Endothelial cell of umbilical vein (primary cell): ENCODE measurements at regions of chr11 and their contacts with region 1.

Region 1: GRCh38 chr11:66677599-66678375 is at the start of gene RBM4B:
- DNase-seq: peak; percentile 97
- H3K4me3 ChIP-seq: peak within 1 kb of the TSS; percentile 65 to 86 (median 76)
- H3K27ac ChIP-seq: peak within 1 kb of the TSS; percentile 87
- H3K4me1 ChIP-seq: peaks cover 17% of the 10 kb centered on the region
- H3K27me3 ChIP-seq: no peaks in the 10 kb centered on the region
- CTCF ChIP-seq: no peak
- POLR2A ChIP-seq: peak; percentile 79
- total RNA-seq, gene RBM4B: 19.4 and 22.2 TPM in 2 replicates

Region 2: GRCh38 chr11:66386171-66387069 is 291.4 kb before region 1 on chr11:
- CTCF ChIA-PET with region 1: interaction called, 15 read pairs
- POLR2A ChIA-PET with region 1: no interaction called
- dilution Hi-C with region 1: no loop called
- intact Hi-C with region 1: no loop called
- DNase-seq: peak; percentile 77
- H3K4me3 ChIP-seq: no peak overlapping the region
- H3K27ac ChIP-seq: no peak overlapping the region
- H3K4me1 ChIP-seq: peaks cover 3% of the 10 kb centered on the region
- H3K27me3 ChIP-seq: peaks cover 4 to 8% of the 10 kb centered on the region in 2 experiments
- CTCF ChIP-seq: peak; percentile 90 to 97
- POLR2A ChIP-seq: no peak

Region 3: DNA sequence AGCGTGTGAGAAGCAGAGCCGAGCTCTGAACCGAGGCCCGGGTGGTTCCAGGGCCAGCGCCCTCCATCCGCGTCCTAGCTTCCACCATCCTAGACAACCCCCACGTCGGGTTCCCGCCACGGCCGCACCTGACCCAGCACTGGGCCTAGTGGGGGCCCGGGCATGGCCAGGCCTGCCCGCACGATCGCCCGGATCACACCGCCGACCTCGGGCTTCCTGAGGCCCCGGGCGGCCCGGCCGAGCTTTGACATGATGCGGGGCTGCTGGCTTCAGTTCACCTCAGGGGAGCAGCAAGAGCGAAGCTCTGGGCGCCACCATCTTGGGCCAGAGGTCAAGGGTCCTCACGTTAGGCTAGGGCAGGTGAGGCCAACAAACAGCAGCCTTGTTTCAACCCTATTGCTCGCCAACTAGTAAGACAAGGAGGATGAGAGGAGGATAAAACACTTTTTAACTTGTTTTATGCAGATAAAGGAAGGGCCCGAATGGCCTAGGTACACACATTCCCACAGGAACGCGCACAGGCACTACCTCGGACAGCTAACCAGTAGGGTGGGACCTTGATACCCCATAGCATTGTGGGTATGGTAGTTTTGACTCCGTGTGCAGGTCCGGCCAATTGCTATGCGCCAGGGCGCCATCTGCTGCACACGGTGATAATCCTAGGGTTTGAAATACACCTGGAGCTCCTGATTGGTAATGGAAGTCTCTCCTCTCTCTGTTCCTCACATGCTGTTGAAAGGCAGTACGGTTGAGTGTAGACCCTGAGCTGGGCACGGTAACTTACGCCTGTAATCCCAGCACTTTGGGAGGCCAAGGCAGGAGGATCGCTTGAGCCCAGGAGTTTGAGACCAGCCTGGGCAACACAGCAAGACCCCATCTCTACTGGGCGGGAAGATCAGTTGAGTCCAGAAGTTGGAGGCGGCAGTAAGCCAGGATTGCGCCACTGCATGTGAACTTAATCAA is 239.0 kb before region 1 on chr11 and contains the start of gene MRPL11:
- CTCF ChIA-PET with region 1: interaction called, 19 read pairs
- POLR2A ChIA-PET with region 1: interaction called, 4 read pairs
- dilution Hi-C with region 1: no loop called
- intact Hi-C with region 1: no loop called
- DNase-seq: peak; percentile 95
- H3K4me3 ChIP-seq: peak within 1 kb of the TSS; percentile 59 to 80 (median 64)
- H3K27ac ChIP-seq: peak within 1 kb of the TSS; percentile 77
- H3K4me1 ChIP-seq: peaks cover 6% of the 10 kb centered on the region
- H3K27me3 ChIP-seq: no peaks in the 10 kb centered on the region
- CTCF ChIP-seq: peak; percentile 70 to 77
- POLR2A ChIP-seq: no peak
- total RNA-seq, gene MRPL11: 69.1 and 72.1 TPM in 2 replicates

Region 4: DNA sequence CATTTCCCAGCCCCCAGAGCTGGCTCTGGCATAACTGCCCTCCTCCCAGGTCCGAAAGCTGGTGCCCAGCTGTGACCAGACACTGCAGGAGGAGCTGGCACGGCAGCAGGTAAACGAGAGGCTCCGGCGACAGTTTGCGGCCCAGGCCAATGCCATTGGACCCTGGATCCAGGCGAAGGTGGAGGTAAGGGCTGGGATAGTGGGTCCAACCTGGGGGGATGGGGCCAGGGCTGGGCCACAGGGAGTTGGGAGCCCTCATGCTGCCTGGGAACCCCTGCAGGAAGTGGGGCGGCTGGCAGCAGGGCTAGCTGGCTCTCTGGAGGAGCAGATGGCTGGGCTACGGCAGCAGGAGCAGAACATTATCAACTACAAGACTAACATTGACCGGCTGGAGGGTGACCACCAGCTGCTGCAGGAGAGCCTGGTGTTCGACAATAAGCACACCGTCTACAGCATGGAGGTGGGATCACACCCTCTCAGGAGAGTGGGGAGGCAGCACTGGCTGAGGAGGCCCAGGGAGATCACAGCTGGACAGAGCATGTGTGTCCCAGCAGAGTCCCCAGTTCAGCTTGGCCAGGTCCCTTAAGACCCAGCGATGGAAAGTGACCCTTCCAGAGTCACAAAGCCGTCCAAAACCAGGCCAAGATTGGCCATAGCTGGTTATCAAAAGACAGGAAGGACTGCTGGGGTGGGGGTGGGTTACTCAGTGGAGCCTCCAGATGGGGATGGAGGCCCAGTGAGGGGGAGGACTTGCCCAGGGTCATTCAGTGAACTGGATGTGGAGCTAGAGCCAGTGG is 116.4 kb before region 1 on chr11:
- CTCF ChIA-PET with region 1: interaction called, 13 read pairs
- POLR2A ChIA-PET with region 1: no interaction called
- dilution Hi-C with region 1: no loop called
- intact Hi-C with region 1: no loop called
- DNase-seq: no peak
- H3K4me3 ChIP-seq: no peak overlapping the region
- H3K27ac ChIP-seq: no peak overlapping the region
- H3K4me1 ChIP-seq: no peaks in the 10 kb centered on the region
- H3K27me3 ChIP-seq: peaks cover 5 to 6% of the 10 kb centered on the region in 2 experiments
- CTCF ChIP-seq: no peak
- POLR2A ChIP-seq: no peak

Region 5: GRCh38 chr11:66586136-66586535 is 91.7 kb before region 1 on chr11:
- CTCF ChIA-PET with region 1: interaction called, 143 read pairs
- POLR2A ChIA-PET with region 1: interaction called, 6 read pairs
- dilution Hi-C with region 1: no loop called
- intact Hi-C with region 1: loop called (anchors 5 kb)
- DNase-seq: no peak
- H3K4me3 ChIP-seq: no peak overlapping the region
- H3K27ac ChIP-seq: no peak overlapping the region
- H3K4me1 ChIP-seq: no peaks in the 10 kb centered on the region
- H3K27me3 ChIP-seq: peaks cover 0 to 2% of the 10 kb centered on the region in 2 experiments
- CTCF ChIP-seq: no peak
- POLR2A ChIP-seq: no peak

Region 6: DNA sequence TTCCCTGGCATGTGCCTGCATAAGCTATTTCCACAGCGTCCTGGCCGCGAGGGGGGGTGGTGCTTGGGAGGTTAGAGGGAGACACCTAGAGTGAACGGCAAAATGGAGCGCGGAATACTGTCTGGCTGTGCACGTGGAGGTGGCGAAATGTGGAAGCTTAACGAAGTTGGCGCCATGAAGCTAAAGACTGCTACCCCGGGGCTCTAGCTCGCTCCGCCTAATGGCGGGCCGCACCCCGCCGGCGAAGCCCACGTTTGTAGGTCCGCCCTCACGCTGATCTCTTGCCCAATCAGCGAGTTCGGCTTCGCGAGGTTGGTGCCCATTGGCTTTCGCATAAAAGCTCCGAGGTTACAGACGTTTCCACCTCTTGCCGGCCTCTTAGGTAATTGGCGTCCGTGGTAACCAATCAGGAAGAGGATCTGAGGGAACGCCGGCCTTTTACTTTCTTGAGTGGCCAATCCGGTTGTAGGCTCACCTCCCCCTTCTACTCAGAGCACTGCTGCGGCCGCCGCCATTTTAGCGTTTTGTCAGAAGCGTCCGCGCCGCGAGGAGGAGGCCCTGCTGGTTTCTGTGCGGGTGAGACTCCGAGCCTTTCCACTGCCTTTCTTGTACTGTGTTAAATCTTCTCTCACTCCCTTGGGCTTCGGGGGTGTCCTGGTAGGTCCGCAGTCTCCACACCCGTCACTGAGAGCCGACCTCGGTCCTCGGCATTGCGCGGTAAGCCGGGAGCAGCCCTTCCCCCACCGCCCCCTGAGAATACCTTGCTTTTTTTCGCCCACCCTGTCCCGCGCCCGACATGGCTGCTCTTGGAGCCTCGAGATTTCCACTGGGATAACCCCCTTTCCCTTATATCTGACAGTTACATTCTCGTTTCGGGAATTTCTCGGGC is 39.4 kb before region 1 on chr11 and contains the start of gene RBM4:
- CTCF ChIA-PET with region 1: interaction called, 32 read pairs
- POLR2A ChIA-PET with region 1: interaction called, 27 read pairs
- dilution Hi-C with region 1: no loop called
- intact Hi-C with region 1: loop called (anchors 1 kb)
- DNase-seq: peak; percentile 100
- H3K4me3 ChIP-seq: peak within 1 kb of the TSS; percentile 84 to 94 (median 89)
- H3K27ac ChIP-seq: peak within 1 kb of the TSS; percentile 72
- H3K4me1 ChIP-seq: peaks cover 45% of the 10 kb centered on the region
- H3K27me3 ChIP-seq: no peaks in the 10 kb centered on the region
- CTCF ChIP-seq: peak in 1 of 2 donors; percentile 21
- POLR2A ChIP-seq: peak; percentile 97
- total RNA-seq, gene RBM4: 148 and 153 TPM in 2 replicates